ENCODE measurements at regions of chr6 and their contacts with region 1.

Region 1: GRCh38 chr6:148471624-148472159 is 129.1 kb downstream of the SASH1 start:
- DNase-seq: no peak
- H3K4me3 ChIP-seq: peak overlapping the region in 11 of 59 donors; percentile 7 to 35 (median 13)
- H3K27ac ChIP-seq: peak overlapping the region; percentile 5 to 93 (median 81)
- H3K27me3 ChIP-seq: no peaks in the 10 kb centered on the region
- CTCF ChIP-seq: no peak

Region 2: DNA sequence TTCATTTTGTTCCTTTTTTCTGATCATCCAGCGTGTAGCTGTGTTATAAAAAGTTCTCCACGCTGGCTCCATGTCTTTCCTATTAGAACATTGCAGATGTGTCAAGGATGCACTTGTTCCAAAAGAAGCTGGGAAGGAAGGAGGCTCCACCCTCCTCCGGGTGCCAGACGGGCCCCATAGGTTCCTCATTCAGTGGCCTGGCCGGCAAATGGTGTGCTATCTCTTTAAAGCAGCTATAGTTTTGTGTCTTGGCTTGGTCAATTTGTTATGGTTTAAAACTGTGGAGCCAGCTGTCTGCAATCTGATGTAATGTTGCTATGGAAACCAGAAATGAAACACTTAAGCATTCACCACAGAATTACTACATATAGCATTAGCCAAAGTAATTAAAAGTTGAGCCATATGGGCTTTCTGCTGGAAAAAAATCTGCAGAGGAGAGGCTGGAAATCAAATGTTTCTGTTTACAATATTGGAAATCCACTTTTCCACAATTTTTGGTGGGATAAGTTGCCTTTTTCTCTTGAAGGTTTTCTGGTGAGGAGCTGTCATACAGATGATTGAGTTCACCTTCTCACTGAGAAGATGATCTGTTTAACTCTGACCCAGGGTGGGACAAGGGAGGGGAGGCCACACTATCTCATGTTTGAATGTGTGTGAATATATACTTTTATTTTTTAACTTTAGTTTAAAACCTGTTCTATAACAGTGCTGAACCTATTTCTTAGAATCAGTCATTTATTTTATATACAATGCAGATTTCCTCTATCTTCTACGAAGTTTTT is 38.3 kb after region 1 on chr6:
- intact Hi-C with region 1: loop called in 1 of 2 experiments (anchors 5 kb)
- DNase-seq: peak in 2 of 10 donors; percentile 54 to 57
- H3K4me3 ChIP-seq: peak overlapping the region; percentile 24 to 79 (median 62)
- H3K27ac ChIP-seq: peak overlapping the region; percentile 78 to 98 (median 93)
- H3K27me3 ChIP-seq: no peaks in the 10 kb centered on the region
- CTCF ChIP-seq: no peak

Region 3: GRCh38 chr6:148657048-148657447 is 185.4 kb after region 1 on chr6:
- intact Hi-C with region 1: no loop called
- DNase-seq: no peak
- H3K4me3 ChIP-seq: no peak overlapping the region
- H3K27ac ChIP-seq: peak overlapping the region in 8 of 59 donors; percentile 3 to 63 (median 34)
- H3K27me3 ChIP-seq: no peaks in the 10 kb centered on the region
- CTCF ChIP-seq: no peak